ENCODE measurements at regions of chr1 and their contacts with region 1.

Region 1: DNA sequence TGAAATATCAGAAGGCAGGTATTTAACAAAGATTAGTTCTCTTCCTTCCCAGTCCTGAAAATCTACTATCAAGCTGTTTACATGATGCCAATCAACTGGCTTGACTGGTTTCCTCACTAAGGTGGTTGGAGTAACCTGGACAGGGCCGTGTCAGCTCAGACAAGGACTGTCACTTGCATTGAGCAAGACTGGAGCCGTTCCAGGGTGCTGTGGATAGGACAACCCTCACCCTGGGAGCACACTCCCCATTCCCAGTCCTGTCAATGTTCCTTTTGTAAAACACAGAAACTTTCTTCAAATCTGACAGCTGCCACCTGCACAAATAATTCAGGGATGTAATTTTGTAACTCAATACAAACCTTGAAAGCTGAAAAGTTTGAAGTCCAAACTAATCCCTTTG is 31.4 kb downstream of the PLPP3 start:
- DNase-seq: peak; percentile 62 to 83
- H3K4me3 ChIP-seq: no peak overlapping the region
- H3K27ac ChIP-seq: peak overlapping the region; percentile 54
- H3K4me1 ChIP-seq: peaks cover 25% of the 10 kb centered on the region
- H3K27me3 ChIP-seq: no peaks in the 10 kb centered on the region
- CTCF ChIP-seq: no peak

Region 2: GRCh38 chr1:56570924-56571372 is 23.0 kb after region 1 on chr1:
- CTCF ChIA-PET with region 1: no interaction called
- POLR2A ChIA-PET with region 1: no interaction called
- intact Hi-C with region 1: loop called (anchors 2 kb)
- DNase-seq: peak; percentile 22 to 92
- H3K4me3 ChIP-seq: no peak overlapping the region
- H3K27ac ChIP-seq: peak overlapping the region; percentile 65
- H3K4me1 ChIP-seq: peaks cover 68% of the 10 kb centered on the region
- H3K27me3 ChIP-seq: no peaks in the 10 kb centered on the region
- CTCF ChIP-seq: no peak